Activated CD4-positive, alpha-beta memory T cell treated with anti-CD3 and anti-CD28 coated beads for 36 hours (primary cell): ENCODE measurements at regions of chr20 and their contacts with region 1.

Region 1: GRCh38 chr20:39070484-39071231 is 108.5 kb downstream of the DHX35 start:
- DNase-seq: no peak
- H3K4me3 Mint-ChIP-seq: no peak overlapping the region
- H3K27ac Mint-ChIP-seq: no peak overlapping the region
- H3K4me1 Mint-ChIP-seq: no peaks in the 10 kb centered on the region
- H3K27me3 Mint-ChIP-seq: peaks cover 24% of the 10 kb centered on the region

Region 2: GRCh38 chr20:39081255-39081654 is 10.6 kb after region 1 on chr20:
- CTCF ChIA-PET with region 1: interaction called, 21 read pairs
- POLR2A ChIA-PET with region 1: no interaction called
- intact Hi-C with region 1: no loop called
- DNase-seq: peak; percentile 86
- H3K4me3 Mint-ChIP-seq: no peak overlapping the region
- H3K27ac Mint-ChIP-seq: no peak overlapping the region
- H3K4me1 Mint-ChIP-seq: no peaks in the 10 kb centered on the region
- H3K27me3 Mint-ChIP-seq: peaks cover 26% of the 10 kb centered on the region